ENCODE measurements at regions of chr1 and their contacts with region 1.

Region 1: DNA sequence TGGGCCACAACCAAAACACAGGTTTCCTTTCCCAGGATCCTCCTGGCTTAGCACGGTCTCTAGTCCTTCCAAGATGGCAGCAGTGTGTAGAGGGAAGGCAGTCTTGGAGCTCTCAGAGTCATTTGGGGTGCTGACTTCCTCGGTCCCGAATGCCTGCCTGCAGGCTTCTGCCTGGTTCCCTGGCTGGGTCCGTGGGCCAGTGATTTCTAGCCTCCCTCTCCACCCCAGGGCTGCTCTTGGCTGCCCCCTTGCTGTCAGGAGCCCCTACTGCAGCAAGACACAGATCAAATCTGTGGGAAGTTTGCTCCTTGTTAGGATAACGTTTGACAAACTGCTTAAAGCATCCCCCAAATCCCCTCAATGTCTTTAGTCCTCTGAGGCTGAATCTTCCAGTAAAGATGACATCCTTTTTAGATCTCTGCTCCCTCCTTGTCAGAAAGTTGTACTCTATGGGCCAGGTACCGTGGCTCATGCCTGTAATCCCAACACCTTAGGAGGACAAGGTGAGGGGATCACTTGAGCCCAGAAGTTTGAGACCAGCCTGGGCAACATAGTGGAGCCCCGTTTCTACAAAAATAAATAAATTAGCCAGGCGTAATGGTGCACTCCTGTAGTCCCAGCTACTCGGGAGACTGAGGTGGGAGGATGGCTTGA is 272.5 kb downstream of the RRAGC start:
- DNase-seq: peak; percentile 18 to 75
- H3K4me3 ChIP-seq: no peak overlapping the region
- H3K4me1 ChIP-seq: no peaks in the 10 kb centered on the region
- H3K27me3 ChIP-seq: peaks cover 5% of the 10 kb centered on the region; the same call in 1 of the 2 replicates

Region 2: DNA sequence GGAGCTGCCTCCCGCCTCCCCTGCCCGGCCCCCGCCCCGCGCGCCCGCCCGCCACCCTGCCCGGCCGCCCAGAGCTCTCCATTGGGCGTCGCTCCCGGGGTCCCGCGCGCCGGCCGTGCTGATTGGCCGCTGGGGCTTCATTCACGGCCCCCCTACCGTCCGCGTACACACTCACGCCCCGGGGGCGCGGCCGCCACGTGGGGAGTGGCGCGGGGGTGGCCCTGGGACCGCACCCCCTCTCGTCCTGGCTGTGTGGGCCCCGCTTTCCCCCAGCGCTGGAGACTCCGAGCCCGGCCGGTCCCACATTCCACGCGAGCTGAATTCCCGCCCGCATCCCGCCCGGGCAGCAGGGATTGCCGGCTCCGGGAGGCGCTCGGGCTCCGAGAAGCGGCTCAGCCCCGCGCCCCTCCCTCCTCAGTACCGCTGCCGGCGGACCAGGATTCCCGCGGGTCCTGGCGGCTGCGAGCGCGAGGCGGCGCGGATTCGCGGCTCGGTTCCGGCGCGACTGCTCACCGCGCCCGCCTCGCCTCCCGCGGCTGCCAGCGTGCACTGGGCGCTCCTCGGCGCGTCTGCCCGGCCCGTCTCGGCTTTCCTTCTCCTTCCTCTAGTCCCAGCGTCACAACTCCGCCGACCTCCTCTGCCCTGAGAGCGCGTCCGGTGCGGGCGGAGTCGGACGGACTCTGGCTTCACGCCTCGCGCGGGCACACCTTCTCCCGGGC is 540.1 kb before region 1 on chr1:
- in situ Hi-C with region 1: loop called (anchors 25 kb)
- DNase-seq: peak; percentile 76 to 94
- H3K4me3 ChIP-seq: peak overlapping the region; percentile 50
- H3K4me1 ChIP-seq: no peaks in the 10 kb centered on the region; the same call in 1 of the 2 replicates
- H3K27me3 ChIP-seq: peaks cover 3% of the 10 kb centered on the region; the same call in 1 of the 2 replicates

Region 3: DNA sequence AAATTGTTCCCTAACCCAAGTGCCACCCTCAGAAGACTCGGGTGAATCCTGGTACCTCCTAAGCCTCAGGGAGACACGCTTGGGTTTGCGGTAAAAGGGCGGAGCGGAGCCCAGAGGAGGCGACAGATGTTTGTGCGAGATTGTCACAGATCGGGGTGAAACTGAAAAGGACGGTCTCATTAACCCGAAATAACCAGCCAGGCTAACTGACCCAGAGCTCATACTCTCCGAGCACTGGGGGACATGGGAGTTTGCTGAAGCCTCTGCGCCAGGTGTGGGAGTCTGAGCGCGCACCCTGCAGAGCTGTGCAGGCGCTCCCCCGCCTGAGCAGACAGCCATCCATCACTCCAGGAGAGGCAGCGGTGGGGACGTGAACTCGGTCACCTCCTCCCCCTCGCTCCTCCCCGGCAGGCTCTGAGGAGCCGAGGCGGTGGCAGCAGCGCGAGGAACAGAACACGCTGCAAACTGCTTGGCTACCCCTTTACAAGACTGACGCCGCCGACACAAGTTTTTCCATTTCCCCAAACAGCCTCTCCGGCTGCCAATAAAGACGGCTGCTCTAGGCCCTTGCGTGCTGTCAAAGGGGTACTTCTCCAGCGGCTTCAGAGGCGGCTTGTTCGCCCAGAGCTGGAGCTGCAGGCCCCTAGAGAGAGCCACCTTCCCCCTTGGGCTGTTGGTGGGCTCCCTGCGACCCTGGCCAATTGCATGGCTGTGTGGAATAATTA is 228.9 kb after region 1 on chr1:
- in situ Hi-C with region 1: no loop called
- DNase-seq: no peak
- H3K4me3 ChIP-seq: no peak overlapping the region
- H3K4me1 ChIP-seq: no peaks in the 10 kb centered on the region; the same call in 1 of the 2 replicates
- H3K27me3 ChIP-seq: peaks cover 48% of the 10 kb centered on the region